Activated CD4-positive, alpha-beta T cell treated with anti-CD3 and anti-CD28 coated beads for 36 hours (primary cell): ENCODE measurements at regions of chr11 and their contacts with region 1.

Region 1: GRCh38 chr11:48001438-48002021 is 21.2 kb downstream of the PTPRJ start:
- DNase-seq: peak; percentile 90
- ATAC-seq: peak; percentile 86
- H3K4me3 Mint-ChIP-seq: peak overlapping the region; percentile 59
- H3K27ac Mint-ChIP-seq: peak overlapping the region; percentile 98
- H3K4me1 Mint-ChIP-seq: peaks cover 85% of the 10 kb centered on the region
- H3K27me3 Mint-ChIP-seq: no peaks in the 10 kb centered on the region

Region 2: DNA sequence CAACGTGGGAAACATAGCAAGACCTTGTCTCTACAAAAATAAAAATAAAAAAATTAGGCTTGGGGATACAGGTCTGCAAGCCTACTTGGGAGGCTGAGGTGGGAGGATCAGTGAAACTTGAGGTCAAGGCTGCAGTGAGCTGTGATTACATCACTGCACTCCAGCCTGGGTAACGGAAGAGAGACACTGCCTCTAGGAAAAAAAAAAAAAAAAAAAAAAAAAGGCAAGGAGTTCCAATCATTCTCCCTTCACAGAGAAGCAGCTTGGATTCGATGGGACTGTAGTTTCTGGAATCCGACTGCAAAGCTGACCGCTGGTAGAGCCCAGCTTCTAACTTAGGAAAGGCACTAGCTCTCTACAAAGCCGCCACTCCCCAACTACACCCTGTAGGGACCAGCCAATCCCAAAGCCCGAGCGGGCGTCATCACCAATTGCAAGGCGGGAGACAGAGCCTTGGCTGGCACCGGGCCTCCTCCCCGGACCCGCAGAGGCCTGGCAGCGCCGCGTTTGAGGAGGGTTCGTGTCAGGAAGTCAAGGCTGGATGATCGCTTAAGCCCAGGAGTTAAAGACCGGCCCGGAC is 787.5 kb before region 1 on chr11:
- CTCF ChIA-PET with region 1: no interaction called
- POLR2A ChIA-PET with region 1: no interaction called
- intact Hi-C with region 1: loop called in 1 of 2 experiments (anchors 10 kb)
- DNase-seq: peak; percentile 94
- ATAC-seq: peak; percentile 80
- H3K4me3 Mint-ChIP-seq: peak overlapping the region; percentile 99
- H3K27ac Mint-ChIP-seq: peak overlapping the region; percentile 100
- H3K4me1 Mint-ChIP-seq: peaks cover 31% of the 10 kb centered on the region
- H3K27me3 Mint-ChIP-seq: no peaks in the 10 kb centered on the region

Region 3: DNA sequence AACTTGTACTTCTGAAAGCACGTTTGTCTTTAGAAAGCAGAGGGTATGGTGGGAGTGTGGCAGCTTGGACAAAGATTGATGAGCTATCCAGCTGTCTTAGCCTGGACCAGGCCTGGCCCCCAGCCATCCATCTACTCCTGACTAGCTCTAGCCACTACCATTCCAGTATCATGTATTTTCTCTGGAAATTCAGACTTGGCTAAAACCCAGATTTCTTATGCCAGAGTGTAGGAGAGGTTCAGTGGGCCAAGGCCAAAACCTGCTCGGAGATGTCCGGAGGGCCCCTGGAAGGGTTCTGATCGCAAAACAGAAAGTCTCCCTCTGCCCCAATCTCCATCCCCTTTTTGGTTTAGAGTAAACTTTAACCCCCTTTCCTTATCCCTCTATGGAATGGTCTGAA is 334.4 kb before region 1 on chr11:
- CTCF ChIA-PET with region 1: no interaction called
- POLR2A ChIA-PET with region 1: no interaction called
- intact Hi-C with region 1: loop called in 1 of 2 experiments (anchors 1 kb)
- DNase-seq: no peak
- ATAC-seq: no peak
- H3K4me3 Mint-ChIP-seq: no peak overlapping the region
- H3K27ac Mint-ChIP-seq: no peak overlapping the region
- H3K4me1 Mint-ChIP-seq: peaks cover 27% of the 10 kb centered on the region
- H3K27me3 Mint-ChIP-seq: no peaks in the 10 kb centered on the region

Region 4: DNA sequence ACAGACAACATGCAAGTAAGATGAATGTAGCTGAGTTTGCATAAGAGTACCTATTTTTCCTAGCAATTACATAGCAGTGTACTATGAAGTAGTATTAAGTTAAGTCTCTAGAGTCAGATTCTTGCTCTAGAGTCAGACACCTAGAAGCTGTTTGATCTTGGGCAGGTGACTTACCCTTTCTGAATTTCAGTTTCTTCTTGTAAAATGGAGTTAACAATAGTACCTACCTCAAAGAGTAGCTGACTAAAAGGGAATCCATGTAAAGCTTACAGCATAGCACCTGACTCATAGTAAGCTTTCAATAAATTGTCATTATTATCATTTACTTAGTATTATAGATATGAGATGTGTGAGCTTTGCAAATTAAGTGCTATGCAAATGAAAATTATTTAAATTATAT is 69.0 kb before region 1 on chr11:
- CTCF ChIA-PET with region 1: interaction called, 12 read pairs
- POLR2A ChIA-PET with region 1: interaction called, 10 read pairs
- intact Hi-C with region 1: loop called (anchors 1 to 5 kb)
- DNase-seq: no peak
- ATAC-seq: peak; percentile 84
- H3K4me3 Mint-ChIP-seq: no peak overlapping the region
- H3K27ac Mint-ChIP-seq: no peak overlapping the region
- H3K4me1 Mint-ChIP-seq: peaks cover 21% of the 10 kb centered on the region
- H3K27me3 Mint-ChIP-seq: no peaks in the 10 kb centered on the region

Region 5: GRCh38 chr11:48020092-48020755 is 18.7 kb after region 1 on chr11:
- CTCF ChIA-PET with region 1: interaction called, 11 read pairs
- POLR2A ChIA-PET with region 1: interaction called, 8 read pairs
- intact Hi-C with region 1: loop called (anchors 1 to 2 kb)
- DNase-seq: peak; percentile 59
- ATAC-seq: peak; percentile 59
- H3K4me3 Mint-ChIP-seq: peak overlapping the region; percentile 13
- H3K27ac Mint-ChIP-seq: peak overlapping the region; percentile 76
- H3K4me1 Mint-ChIP-seq: peaks cover 72% of the 10 kb centered on the region
- H3K27me3 Mint-ChIP-seq: no peaks in the 10 kb centered on the region

Region 6: DNA sequence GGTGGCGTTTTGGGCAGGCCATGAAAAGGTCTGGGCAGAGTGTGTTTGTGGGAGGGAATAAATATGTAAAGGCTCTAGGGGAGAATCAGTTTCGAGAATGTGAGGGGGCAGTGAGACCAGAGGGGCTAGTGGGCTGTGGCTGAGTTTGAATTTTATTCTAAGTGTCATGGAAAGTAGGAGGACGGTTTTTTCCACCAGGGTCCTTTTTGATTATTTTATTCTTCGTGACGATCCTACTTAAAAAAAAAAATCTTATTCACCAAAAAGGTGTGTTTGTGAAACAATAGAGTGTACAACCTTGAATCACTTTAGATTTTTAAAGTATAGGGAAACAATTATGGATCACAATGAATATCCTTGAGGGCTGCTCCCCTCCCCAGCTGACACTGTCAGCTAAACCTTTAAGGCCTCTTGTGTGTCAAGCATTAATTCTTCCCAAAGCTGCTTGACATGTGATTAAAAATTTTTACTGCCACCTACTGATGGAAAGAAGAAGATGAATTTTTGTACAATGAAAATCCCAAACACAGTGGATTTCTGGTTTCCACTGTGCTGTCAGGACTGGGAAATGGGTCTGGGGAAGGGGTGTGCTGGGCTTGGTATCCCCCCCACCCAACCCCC is 107.6 kb after region 1 on chr11:
- CTCF ChIA-PET with region 1: interaction called, 26 read pairs
- POLR2A ChIA-PET with region 1: interaction called, 4 read pairs
- intact Hi-C with region 1: loop called (anchors 1 kb)
- DNase-seq: no peak
- ATAC-seq: peak; percentile 34
- H3K4me3 Mint-ChIP-seq: peak overlapping the region; percentile 66
- H3K27ac Mint-ChIP-seq: peak overlapping the region; percentile 87
- H3K4me1 Mint-ChIP-seq: peaks cover 49% of the 10 kb centered on the region
- H3K27me3 Mint-ChIP-seq: no peaks in the 10 kb centered on the region

Region 7: GRCh38 chr11:48228761-48229160 is 227.2 kb after region 1 on chr11:
- CTCF ChIA-PET with region 1: no interaction called
- POLR2A ChIA-PET with region 1: no interaction called
- intact Hi-C with region 1: no loop called
- DNase-seq: no peak
- ATAC-seq: no peak
- H3K4me3 Mint-ChIP-seq: no peak overlapping the region
- H3K27ac Mint-ChIP-seq: no peak overlapping the region
- H3K4me1 Mint-ChIP-seq: no peaks in the 10 kb centered on the region
- H3K27me3 Mint-ChIP-seq: peaks cover 15% of the 10 kb centered on the region